Right ventricle myocardium inferior (tissue), 1 donor: ENCODE measurements at regions of chr5 and their contacts with region 1.

Region 1: GRCh38 chr5:178331399-178331996 is 98.9 kb upstream of the PHYKPL start:
- DNase-seq: peak; percentile 85
- ATAC-seq: peak; percentile 87

Region 2: GRCh38 chr5:178120868-178121357 is 210.6 kb before region 1 on chr5:
- intact Hi-C with region 1: no loop called
- DNase-seq: peak; percentile 92
- ATAC-seq: peak; percentile 73

Region 3: DNA sequence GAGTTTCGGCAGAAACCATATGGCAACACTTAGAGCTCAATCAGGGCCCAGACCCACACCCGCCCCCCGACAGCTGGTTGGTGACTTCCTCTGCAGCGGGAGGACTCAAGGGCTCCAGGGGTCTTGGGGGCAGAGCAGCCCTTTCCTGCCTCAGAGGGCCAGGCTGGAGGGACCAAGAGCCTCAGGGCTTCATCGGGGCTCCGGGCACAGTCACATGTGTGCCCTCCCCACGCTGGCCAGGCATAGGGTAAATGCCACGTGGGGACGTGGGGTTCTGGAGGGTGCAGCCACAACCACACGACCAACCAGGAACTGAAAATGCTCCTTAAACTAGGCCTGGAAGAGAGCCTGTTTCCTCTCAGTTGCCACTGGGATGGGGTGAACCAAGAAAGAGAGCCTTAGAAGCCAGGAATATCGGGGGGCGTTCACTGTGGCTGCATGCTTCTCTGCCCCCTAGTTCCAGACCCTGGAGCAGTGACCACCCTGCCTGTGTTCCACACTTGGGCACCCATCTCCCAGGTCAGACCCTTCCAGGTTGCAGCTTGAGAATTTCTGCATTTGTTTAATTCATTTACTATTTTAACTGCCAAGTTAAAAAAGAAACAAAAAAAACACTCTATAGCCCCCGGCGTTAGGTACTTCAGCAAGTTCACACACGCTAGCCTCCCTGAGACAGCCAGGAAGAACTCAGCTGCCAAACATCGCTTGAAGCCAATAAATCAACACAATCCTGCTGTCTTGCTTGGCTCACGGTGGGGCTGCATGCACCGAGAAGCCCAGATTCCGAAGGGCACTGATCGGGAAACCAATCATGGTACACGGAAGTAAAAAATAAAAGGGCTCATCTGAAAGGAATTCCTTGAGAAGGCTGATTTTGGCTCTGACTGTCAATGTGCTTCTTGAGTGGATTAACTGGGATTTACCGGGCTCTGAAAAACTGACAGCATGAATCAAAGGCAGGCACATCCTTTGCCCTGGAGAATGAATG is 42.8 kb before region 1 on chr5:
- intact Hi-C with region 1: loop called (anchors 5 kb)
- DNase-seq: peak; percentile 30
- ATAC-seq: no peak

Region 4: DNA sequence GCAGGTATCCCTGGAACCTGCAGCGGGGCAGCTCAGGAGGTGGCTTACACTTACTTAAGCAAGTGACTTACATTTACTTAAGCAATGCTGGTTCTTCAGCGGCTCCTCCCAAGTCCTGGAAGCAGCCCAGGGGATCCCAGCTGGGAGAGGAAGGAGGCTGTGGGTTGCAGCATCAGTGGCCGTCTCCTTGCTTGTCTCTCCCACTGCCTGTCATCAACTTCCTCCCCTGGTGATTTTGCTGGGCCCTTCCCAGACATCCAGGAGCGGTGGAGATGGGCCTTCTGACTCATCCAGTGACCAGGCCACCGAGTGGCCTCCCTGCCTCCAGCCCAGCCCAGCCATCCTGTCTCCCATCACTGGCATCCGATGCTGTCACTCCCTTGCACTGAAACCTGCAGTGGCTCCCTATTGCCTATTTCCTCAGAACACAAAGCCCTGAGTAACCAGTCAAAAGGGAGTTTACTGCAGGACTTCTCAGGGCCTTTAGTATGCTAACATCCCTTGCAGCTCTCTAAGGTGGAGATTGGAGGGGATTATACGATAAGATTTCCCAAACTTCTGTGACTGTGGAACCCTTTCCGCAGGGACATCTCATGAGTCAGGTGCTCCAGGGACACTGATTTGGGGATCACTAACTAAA is 57.0 kb after region 1 on chr5:
- intact Hi-C with region 1: loop called (anchors 5 kb)
- DNase-seq: peak; percentile 66
- ATAC-seq: peak; percentile 33

Region 5: DNA sequence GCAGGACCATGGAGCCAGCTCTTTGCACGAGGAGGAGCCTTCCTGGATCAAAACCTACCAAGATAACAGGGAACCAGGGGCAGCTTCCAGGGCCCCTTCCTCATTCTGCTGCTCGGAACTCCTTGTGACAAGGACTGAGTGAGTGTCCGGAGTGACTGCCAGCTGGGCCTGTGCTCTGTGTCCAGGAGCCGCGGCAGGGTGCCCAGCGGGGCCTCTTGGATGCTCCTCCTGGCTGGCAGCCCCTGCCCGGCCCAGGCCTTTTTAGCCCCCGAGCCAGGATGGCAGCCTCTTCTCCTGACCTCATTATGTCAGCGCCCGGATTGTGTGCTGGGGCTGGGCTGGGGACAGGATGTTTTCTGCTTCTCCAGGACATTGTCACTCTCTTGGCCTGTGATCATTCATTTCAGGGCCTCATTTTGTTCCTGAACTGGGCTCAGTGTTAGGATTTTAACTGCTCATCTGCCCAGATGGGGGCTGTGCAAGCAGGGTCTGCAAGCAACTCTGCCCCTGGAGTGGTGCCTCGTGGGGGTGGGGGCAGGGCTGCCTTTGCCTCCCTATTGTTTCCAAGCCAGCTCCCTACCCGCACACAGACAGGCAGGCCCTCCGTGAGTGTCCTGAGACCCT is 97.0 kb after region 1 on chr5:
- intact Hi-C with region 1: loop called (anchors 2 kb)
- DNase-seq: peak; percentile 84
- ATAC-seq: peak; percentile 92

Region 6: GRCh38 chr5:178461004-178461730 is 129.7 kb after region 1 on chr5:
- intact Hi-C with region 1: loop called (anchors 10 kb)
- DNase-seq: peak; percentile 86
- ATAC-seq: peak; percentile 93

Region 7: DNA sequence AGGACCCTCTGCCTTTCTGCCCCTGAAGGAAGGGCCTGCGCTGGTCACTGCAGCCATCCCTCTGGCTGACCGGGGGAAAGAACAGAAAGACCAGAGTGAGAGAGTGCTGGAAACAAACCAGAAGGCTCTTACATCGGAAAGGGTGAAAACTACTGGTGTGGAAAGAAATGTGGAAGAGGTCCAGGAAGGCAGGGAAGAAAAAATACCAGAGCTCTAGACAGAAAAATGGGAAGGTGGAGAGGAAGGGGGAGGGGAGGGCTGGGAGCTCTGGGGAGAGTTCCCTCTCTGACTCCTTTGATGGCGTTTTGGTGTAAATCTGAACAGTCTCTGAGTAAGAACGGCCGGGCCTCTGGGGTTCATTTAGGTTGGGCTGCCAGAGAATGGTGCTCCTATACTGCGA is 211.0 kb after region 1 on chr5:
- intact Hi-C with region 1: loop called (anchors 2 kb)
- DNase-seq: no peak
- ATAC-seq: peak; percentile 30

Region 8: GRCh38 chr5:178590141-178590923 is 258.8 kb after region 1 on chr5 and contains the start of gene COL23A1:
- intact Hi-C with region 1: loop called (anchors 5 kb)
- DNase-seq: peak; percentile 86
- ATAC-seq: peak; percentile 87
- total RNA-seq, gene COL23A1: 22.5 TPM